H1 (cell line): ENCODE measurements at regions of chr7 and their contacts with region 1.

Region 1: DNA sequence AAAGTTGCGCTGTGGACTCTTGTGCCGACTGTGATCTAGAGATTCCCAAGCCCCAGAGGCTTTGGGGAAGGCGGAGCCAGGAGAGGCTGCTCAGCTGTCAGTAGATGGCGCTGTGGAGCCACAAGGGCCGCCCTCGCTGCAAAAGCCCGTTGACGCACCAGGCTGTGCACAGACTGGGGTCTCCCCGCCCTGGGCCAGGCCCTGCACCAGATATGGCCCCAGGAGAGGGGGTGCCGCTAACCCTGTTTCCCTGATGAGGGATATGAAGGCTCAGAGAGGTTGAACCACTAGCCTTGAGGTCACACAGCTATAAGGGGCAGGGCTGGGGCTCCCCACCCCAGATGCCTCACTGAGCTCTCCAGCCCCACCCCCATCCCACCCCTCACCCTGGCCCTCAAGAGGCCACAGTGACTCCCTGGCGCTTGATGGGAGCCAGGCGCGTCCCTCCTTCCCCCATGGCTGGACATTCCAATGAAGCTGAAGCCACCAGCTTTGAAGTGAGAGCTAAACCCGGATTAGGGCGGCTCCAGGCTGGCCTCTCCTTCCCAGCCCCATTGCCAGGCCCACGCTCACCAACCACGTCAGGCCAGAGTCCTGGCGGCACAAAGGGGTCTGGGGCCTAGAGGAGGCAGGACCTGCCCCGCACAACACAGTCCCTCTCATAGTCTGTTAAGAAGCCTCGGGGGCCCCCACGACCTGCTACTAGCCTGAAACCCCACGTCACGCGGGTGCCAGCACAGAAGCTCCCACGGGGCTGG is 26.4 kb downstream of the MYL10 start:
- DNase-seq: peak; percentile 77 to 97
- H3K4me3 ChIP-seq: no peak overlapping the region
- H3K27ac ChIP-seq: no peak overlapping the region
- H3K4me1 ChIP-seq: peaks cover 0 to 6% (median 6%) of the 10 kb centered on the region in 4 experiments; a peak in 5 of 7 replicates
- H3K27me3 ChIP-seq: no peaks in the 10 kb centered on the region
- CTCF ChIP-seq: peak; percentile 89 to 97 (median 91)
- EP300 ChIP-seq: peak in 1 of 2 experiments; percentile 23; a peak in 1 of 3 replicates
- POLR2A ChIP-seq: no peak
- RAD21 ChIP-seq: peak; percentile 97

Region 2: GRCh38 chr7:101420436-101420835 is 182.2 kb before region 1 on chr7:
- CTCF ChIA-PET with region 1: no interaction called
- POLR2A ChIA-PET with region 1: no interaction called
- DNase-seq: peak in 1 of 2 experiments; percentile 91
- H3K4me3 ChIP-seq: no peak overlapping the region
- H3K27ac ChIP-seq: no peak overlapping the region
- H3K4me1 ChIP-seq: peaks cover 0 to 14% (median 9%) of the 10 kb centered on the region in 4 experiments; a peak in 6 of 7 replicates
- H3K27me3 ChIP-seq: no peaks in the 10 kb centered on the region
- CTCF ChIP-seq: no peak
- EP300 ChIP-seq: no peak
- POLR2A ChIP-seq: no peak
- RAD21 ChIP-seq: no peak

Region 3: GRCh38 chr7:101567230-101567629 is 35.4 kb before region 1 on chr7:
- CTCF ChIA-PET with region 1: interaction called, 15 read pairs
- POLR2A ChIA-PET with region 1: interaction called, 4 read pairs
- DNase-seq: no peak
- H3K4me3 ChIP-seq: no peak overlapping the region
- H3K27ac ChIP-seq: no peak overlapping the region
- H3K4me1 ChIP-seq: peaks cover 0 to 15% (median 7%) of the 10 kb centered on the region in 4 experiments; a peak in 6 of 7 replicates
- H3K27me3 ChIP-seq: no peaks in the 10 kb centered on the region
- CTCF ChIP-seq: no peak
- EP300 ChIP-seq: no peak
- POLR2A ChIP-seq: no peak
- RAD21 ChIP-seq: no peak

Region 4: DNA sequence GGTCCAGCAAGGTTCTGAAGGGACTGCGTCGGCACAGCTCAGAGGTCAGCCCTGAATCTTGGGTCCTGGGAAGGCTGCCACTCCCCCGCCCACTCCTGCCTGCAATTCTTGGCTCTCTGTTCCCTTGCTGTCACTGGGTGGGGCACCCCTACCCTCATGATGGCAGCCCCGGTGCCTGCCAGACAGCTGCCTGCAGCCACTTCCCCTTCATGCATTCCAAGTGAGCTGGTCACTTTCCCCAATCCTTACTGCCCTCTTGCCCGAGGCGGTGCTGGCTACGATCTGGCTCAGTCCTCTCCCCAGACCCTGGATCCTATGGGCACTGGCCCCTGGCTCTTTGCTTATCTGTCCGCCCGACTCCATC is 12.3 kb after region 1 on chr7:
- CTCF ChIA-PET with region 1: interaction called, 50 read pairs
- POLR2A ChIA-PET with region 1: interaction called, 6 read pairs
- DNase-seq: no peak
- H3K4me3 ChIP-seq: no peak overlapping the region
- H3K27ac ChIP-seq: no peak overlapping the region
- H3K4me1 ChIP-seq: peaks cover 4 to 21% (median 14%) of the 10 kb centered on the region in 4 experiments; a peak in 6 of 7 replicates
- H3K27me3 ChIP-seq: no peaks in the 10 kb centered on the region
- CTCF ChIP-seq: no peak
- EP300 ChIP-seq: no peak
- POLR2A ChIP-seq: no peak
- RAD21 ChIP-seq: no peak

Region 5: GRCh38 chr7:101681170-101682007 is 78.7 kb after region 1 on chr7:
- CTCF ChIA-PET with region 1: interaction called, 14 read pairs
- POLR2A ChIA-PET with region 1: no interaction called
- DNase-seq: no peak
- H3K4me3 ChIP-seq: no peak overlapping the region
- H3K27ac ChIP-seq: no peak overlapping the region
- H3K4me1 ChIP-seq: peaks cover 0 to 10% (median 8%) of the 10 kb centered on the region in 4 experiments; a peak in 4 of 7 replicates
- H3K27me3 ChIP-seq: no peaks in the 10 kb centered on the region
- CTCF ChIP-seq: no peak
- EP300 ChIP-seq: no peak
- POLR2A ChIP-seq: no peak
- RAD21 ChIP-seq: no peak

Region 6: GRCh38 chr7:101804967-101805366 is 202.3 kb after region 1 on chr7:
- CTCF ChIA-PET with region 1: interaction called, 19 read pairs
- POLR2A ChIA-PET with region 1: no interaction called
- DNase-seq: peak; percentile 27 to 84
- H3K4me3 ChIP-seq: peak overlapping the region; percentile 20 to 44 (median 21); a peak in 5 of 8 replicates
- H3K27ac ChIP-seq: no peak overlapping the region
- H3K4me1 ChIP-seq: peaks cover 4 to 15% (median 8%) of the 10 kb centered on the region in 4 experiments; a peak in 5 of 7 replicates
- H3K27me3 ChIP-seq: peaks cover 0 to 7% (median 2%) of the 10 kb centered on the region in 4 experiments; a peak in 4 of 7 replicates
- CTCF ChIP-seq: peak; percentile 34 to 71 (median 51)
- EP300 ChIP-seq: no peak
- POLR2A ChIP-seq: no peak
- RAD21 ChIP-seq: peak; percentile 46 to 67